ENCODE measurements at regions of chr19 and their contacts with region 1.

Region 1: DNA sequence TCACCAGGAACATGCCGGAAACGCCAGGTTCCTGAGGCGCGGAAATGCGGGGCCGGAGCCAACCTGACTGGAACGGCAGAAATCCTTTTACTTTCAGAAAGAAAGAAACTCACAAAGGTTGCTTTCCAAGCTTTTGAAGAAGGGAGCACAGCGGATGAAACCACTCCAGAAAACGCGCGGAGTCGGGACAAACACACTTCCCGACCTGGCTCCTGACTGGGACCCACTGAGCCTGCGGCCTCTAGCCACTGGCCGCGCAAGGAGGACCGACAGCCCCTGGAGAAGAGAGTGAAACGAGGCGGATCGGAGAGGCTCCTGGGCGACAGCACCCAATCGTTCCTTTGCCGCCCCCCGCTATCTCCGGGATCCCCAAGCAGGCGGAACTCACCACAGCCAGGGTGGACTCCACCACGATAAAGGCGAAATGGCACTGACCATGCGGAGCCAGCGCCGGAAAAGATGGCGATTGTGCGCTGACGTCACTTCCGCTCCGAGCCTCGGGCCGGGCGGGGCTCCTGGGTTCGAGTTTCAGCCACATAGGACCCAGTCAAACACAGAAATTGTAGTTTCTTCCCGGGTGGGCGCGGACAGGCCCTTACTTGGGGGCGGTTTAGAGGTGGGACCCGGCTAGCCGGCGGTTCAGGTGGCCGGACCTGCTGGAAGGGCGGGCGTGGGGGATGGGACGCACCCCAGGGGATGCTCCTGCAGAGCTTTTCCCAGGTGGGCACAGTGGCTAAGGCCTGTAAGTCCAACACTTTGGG is at the start of gene ZNF121:
- DNase-seq: peak; percentile 43
- ATAC-seq: peak; percentile 94
- H3K4me3 ChIP-seq: peak within 1 kb of the TSS; percentile 90 to 97
- H3K27ac ChIP-seq: peak within 1 kb of the TSS; percentile 96
- H3K4me1 ChIP-seq: no peaks in the 10 kb centered on the region
- H3K27me3 ChIP-seq: no peaks in the 10 kb centered on the region
- CTCF ChIP-seq: no peak
- total RNA-seq, gene ZNF121: 48.4 TPM

Region 2: GRCh38 chr19:9309974-9310446 is 274.2 kb before region 1 on chr19:
- CTCF ChIA-PET with region 1: no interaction called
- POLR2A ChIA-PET with region 1: no interaction called
- in situ Hi-C with region 1: no loop called
- intact Hi-C with region 1: loop called (anchors 10 kb)
- DNase-seq: peak; percentile 89
- ATAC-seq: peak; percentile 96
- H3K4me3 ChIP-seq: peak overlapping the region; percentile 91 to 97
- H3K27ac ChIP-seq: peak overlapping the region; percentile 88
- H3K4me1 ChIP-seq: no peaks in the 10 kb centered on the region
- H3K27me3 ChIP-seq: no peaks in the 10 kb centered on the region
- CTCF ChIP-seq: no peak

Region 3: GRCh38 chr19:9329999-9330398 is 254.3 kb before region 1 on chr19:
- CTCF ChIA-PET with region 1: no interaction called
- POLR2A ChIA-PET with region 1: no interaction called
- in situ Hi-C with region 1: no loop called
- intact Hi-C with region 1: no loop called
- DNase-seq: no peak
- ATAC-seq: no peak
- H3K4me3 ChIP-seq: no peak overlapping the region
- H3K27ac ChIP-seq: no peak overlapping the region
- H3K4me1 ChIP-seq: no peaks in the 10 kb centered on the region
- H3K27me3 ChIP-seq: no peaks in the 10 kb centered on the region
- CTCF ChIP-seq: no peak

Region 4: GRCh38 chr19:9435279-9436268 is 148.7 kb before region 1 on chr19 and contains the start of gene ZNF266:
- CTCF ChIA-PET with region 1: no interaction called
- POLR2A ChIA-PET with region 1: interaction called, 10 read pairs
- in situ Hi-C with region 1: no loop called
- intact Hi-C with region 1: no loop called
- DNase-seq: peak; percentile 70
- ATAC-seq: peak; percentile 98
- H3K4me3 ChIP-seq: peak within 1 kb of the TSS; percentile 80 to 86
- H3K27ac ChIP-seq: peak within 1 kb of the TSS; percentile 87
- H3K4me1 ChIP-seq: peaks cover 6% of the 10 kb centered on the region; the same call in 1 of the 2 replicates
- H3K27me3 ChIP-seq: no peaks in the 10 kb centered on the region
- CTCF ChIP-seq: peak; percentile 51
- total RNA-seq, gene ZNF266: 10.5 TPM

Region 5: DNA sequence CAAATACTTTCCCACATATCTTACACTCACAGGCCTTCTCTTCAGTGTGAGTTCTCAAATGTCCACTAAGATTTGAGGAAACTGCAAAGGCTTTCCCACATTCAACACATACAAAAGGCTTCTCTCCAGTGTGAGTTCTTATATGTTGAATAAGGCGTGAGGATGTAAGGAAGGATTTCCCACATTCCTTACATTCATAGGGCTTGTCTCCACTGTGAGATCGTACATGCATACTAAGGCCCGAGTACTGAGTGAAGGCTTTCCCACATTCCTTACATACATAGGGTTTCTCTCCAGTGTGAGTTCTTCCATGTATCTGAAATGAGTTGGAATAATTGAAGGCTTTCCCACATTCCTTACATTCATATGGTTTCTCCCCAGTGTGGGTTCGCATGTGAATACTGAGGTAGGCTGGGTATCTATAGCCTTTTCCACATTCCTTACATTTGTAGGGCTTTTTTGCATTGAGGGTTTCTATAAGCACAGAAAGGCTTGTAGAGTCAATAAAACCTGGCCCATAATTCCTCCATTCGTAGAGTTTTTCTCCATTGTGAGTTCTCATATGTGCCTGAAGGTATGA is 55.4 kb before region 1 on chr19:
- CTCF ChIA-PET with region 1: no interaction called
- POLR2A ChIA-PET with region 1: interaction called, 11 read pairs
- in situ Hi-C with region 1: no loop called
- intact Hi-C with region 1: no loop called
- DNase-seq: no peak
- ATAC-seq: no peak
- H3K4me3 ChIP-seq: no peak overlapping the region
- H3K27ac ChIP-seq: no peak overlapping the region
- H3K4me1 ChIP-seq: no peaks in the 10 kb centered on the region
- H3K27me3 ChIP-seq: no peaks in the 10 kb centered on the region
- CTCF ChIP-seq: no peak

Region 6: GRCh38 chr19:9658769-9659168 is 74.5 kb after region 1 on chr19:
- CTCF ChIA-PET with region 1: no interaction called
- POLR2A ChIA-PET with region 1: no interaction called
- in situ Hi-C with region 1: no loop called
- intact Hi-C with region 1: no loop called
- DNase-seq: no peak
- ATAC-seq: no peak
- H3K4me3 ChIP-seq: no peak overlapping the region
- H3K27ac ChIP-seq: no peak overlapping the region
- H3K4me1 ChIP-seq: no peaks in the 10 kb centered on the region
- H3K27me3 ChIP-seq: no peaks in the 10 kb centered on the region
- CTCF ChIP-seq: no peak

Region 7: DNA sequence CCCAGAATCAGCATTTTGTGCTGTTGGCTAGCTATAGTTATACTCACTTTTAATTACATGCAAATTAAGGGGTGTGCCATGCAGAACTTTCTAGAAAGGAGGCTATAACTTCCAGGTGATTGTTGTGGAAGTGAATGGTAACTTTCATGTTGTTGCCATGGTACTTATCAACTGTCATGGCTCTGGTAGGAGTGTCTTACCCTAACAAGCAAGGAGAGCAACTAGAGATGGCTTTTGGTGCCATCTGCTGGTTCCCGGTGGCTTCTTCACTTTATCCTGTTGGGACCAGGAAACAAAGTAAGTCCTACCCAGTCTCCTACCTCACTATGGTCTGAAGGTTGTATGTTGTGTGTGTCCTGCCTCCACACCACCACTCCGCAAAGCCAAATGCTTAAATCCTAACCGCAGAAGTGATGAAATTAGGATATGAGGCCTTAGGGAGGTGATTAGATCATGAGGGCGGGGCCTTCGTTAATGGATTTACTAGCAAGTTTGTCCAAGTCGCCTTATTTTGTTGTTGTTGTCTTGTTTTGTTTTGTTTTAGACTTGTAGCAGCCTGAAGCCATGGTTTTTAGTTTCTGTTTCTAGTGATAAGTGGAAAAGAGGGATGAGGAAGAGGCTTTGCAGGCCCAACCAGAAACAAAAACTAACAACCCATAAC is 212.0 kb after region 1 on chr19:
- CTCF ChIA-PET with region 1: no interaction called
- POLR2A ChIA-PET with region 1: no interaction called
- in situ Hi-C with region 1: no loop called
- intact Hi-C with region 1: loop called (anchors 10 kb)
- DNase-seq: peak; percentile 88
- ATAC-seq: peak; percentile 71
- H3K4me3 ChIP-seq: 0 out of 4 replicates have a peak overlapping the region, but pooled peaks of 1 of the 2 experiments have one; percentile 14
- H3K27ac ChIP-seq: no peak overlapping the region
- H3K4me1 ChIP-seq: no peaks in the 10 kb centered on the region
- H3K27me3 ChIP-seq: no peaks in the 10 kb centered on the region
- CTCF ChIP-seq: peak; percentile 82

Measured in Panc1 (cell line).